Breast epithelium (tissue), 4 donors: ENCODE measurements at regions of chr19 and their contacts with region 1.

Region 1: GRCh38 chr19:39078436-39079200 is 5.5 kb upstream of the ACP7 start:
- DNase-seq: no peak
- H3K4me3 ChIP-seq: no peak overlapping the region
- H3K27ac ChIP-seq: no peak overlapping the region
- H3K4me1 ChIP-seq: peaks cover 0 to under 1% of the 10 kb centered on the region in 2 donors
- H3K27me3 ChIP-seq: peaks cover 0 to 11% of the 10 kb centered on the region in 2 donors
- CTCF ChIP-seq: no peak
- POLR2A ChIP-seq: no peak

Region 2: DNA sequence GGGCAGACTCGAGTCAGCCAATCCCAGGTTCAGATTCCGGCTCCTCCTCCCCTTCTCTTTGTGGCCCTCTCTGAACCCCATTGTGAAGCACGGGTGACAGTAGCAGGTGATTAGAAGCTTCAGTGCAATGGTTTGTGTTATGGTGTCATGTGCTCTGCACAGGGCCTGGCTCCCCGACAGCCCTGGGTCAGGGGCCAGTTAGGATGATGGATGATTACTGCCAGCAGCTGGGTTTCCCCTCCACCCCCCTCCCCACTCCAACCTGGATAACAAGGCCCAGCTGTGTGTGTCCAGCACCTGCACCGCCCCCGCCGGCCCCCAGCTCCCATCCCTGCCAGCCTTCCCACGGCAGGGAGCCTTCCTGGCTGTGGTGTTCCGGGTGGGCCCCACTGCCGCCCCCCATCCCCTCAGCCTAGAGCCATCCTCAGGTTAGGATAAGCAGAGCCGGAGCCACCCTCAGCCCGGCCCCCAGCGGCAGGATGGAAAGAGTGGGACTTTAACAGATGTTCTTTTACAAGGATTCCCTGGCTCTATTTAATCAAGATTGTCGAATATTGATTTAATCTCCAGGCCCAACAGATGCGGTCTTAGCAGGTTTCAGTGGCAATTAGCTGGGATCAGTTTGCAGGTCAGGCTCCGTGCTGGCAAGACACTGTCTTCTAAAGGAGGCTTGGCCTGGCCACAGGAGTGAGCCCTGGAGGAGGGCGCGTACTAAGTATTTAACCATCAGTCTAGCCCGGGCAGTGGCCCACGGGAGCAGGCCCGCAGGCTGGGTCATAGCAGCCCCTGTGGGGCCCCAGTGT is 1015.5 kb before region 1 on chr19:
- intact Hi-C with region 1: no loop called
- DNase-seq: no peak
- H3K4me3 ChIP-seq: no peak overlapping the region
- H3K27ac ChIP-seq: peak overlapping the region; percentile 6 to 65
- H3K4me1 ChIP-seq: no peaks in the 10 kb centered on the region
- H3K27me3 ChIP-seq: no peaks in the 10 kb centered on the region
- CTCF ChIP-seq: no peak
- POLR2A ChIP-seq: no peak

Region 3: DNA sequence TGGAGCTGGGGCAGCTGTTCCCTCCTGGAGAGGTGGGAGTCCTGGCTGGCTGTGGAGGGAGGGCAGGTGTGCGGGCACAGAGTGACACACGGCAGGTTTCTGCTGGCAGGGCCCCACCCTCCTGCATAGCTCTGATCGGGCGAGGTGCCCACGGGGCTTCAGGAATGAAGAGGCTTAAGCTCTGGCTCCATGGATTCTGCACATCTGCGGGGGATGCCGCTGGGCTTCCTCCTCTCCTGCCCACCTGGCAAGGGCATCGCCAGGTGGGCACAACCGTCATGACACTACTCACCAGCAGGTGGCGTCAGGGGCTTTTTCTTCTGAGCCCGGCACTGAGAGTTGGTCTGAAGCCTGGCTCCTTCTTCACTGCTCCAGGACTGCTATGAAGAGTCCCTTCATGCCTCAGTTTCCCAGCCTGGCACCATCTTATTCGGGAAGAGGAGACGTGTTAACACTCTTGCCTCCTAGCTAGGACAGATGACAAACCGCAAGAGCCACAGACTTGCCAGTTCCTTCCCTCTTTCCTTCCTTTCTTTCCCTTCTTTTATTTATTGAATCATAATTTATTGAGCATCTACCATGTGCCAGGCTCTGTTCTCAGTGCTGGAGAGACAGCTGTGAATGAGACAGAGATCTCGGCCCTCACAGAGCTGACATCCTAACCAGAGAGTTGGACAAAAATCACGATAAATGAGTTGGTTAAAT is 31.8 kb after region 1 on chr19:
- intact Hi-C with region 1: loop called (anchors 1 kb)
- DNase-seq: peak; percentile 61 to 79
- H3K4me3 ChIP-seq: no peak overlapping the region
- H3K27ac ChIP-seq: no peak overlapping the region
- H3K4me1 ChIP-seq: no peaks in the 10 kb centered on the region
- H3K27me3 ChIP-seq: no peaks in the 10 kb centered on the region
- CTCF ChIP-seq: peak; percentile 74 to 81 (median 77)
- POLR2A ChIP-seq: no peak

Region 4: DNA sequence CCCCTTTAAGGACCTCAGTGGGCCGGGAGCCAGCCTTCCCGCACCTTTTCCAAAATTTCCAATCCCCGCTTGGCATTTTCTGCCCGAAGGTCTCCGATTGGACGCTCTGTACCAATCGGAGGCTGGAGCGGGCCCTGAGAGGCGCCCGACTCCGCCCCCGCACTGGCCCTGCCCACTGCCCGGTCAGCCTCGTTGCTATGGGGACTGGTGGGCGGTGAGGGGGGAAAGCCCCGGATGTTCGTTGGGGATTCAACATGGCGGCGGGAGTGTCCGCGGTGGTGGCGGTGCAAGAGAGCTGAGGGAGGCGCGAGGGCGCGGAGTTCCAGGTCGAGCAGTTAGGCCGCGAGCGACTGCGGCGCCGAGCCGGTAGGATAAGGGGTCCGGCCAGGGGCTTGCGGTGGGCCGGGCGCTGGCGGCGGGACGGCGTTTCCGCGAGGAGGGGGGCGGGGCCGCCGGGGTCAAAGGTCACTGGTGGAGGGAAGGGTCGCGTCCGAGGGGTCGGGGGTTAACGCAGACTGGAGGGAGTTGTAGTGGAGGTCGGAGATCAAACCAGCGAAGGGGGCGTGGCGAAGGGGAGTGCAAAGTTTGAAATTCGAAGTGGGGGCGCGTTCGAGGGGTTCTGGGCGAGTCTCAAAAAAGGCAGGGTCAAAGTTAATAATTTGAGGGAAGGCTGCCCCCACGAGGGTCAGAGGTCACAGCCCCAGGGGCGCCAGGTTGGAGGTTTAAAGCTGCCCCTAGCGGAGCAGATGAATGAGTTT is 47.1 kb after region 1 on chr19 and contains the start of gene PAK4:
- intact Hi-C with region 1: no loop called
- DNase-seq: peak; percentile 98
- H3K4me3 ChIP-seq: peak within 1 kb of the TSS; percentile 80 to 95 (median 91)
- H3K27ac ChIP-seq: peak within 1 kb of the TSS; percentile 90 to 93
- H3K4me1 ChIP-seq: peaks cover 14 to 41% of the 10 kb centered on the region in 2 donors
- H3K27me3 ChIP-seq: no peaks in the 10 kb centered on the region
- CTCF ChIP-seq: no peak
- POLR2A ChIP-seq: peak; percentile 77
- total RNA-seq, gene PAK4: 3.5 to 12.0 (median 10.2) TPM